GM10248 (cell line): ENCODE measurements at regions of chr4 and their contacts with region 1.

Region 1: GRCh38 chr4:141686146-141686775 is 49.9 kb downstream of the IL15 start:
- DNase-seq: no peak
- CTCF ChIP-seq: no peak

Region 2: DNA sequence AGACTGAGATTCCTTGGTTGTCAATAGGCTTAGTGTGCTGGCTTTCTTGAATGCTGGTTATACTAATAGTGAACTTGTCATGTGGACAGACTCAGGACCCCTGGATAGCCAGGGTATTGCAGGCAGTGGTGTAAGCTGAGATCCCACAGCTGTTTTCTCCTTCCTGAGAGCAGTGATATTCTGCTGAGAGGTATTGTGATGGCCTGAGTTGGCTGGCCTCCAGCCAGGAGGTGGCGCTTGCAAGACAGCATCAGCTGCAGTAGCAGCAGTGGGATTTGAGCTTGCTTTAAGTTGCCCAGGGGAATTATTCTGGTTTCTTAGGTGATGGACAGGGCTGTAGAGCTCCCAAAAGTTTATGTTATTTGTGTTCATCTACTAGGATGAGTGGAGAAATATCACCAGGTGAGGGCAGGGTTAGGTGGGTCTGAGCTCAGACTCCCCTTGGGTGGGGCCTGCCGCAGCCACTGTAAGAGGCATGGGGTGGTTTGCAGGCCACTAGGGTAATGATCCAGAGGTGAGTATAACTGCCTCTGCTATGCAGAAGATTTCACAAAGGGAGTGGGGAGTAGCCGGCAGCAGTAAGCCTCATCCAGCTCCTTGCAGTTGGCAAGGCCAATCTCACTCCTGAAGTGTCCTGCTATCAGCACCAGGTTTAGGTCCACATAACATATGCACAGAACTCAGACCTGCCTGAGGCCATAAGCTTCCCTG is 16.4 kb after region 1 on chr4:
- CTCF ChIA-PET with region 1: interaction called, 34 read pairs
- POLR2A ChIA-PET with region 1: no interaction called
- DNase-seq: no peak
- CTCF ChIP-seq: peak; percentile 13